ENCODE measurements at regions of chr1 and their contacts with region 1.

Region 1: DNA sequence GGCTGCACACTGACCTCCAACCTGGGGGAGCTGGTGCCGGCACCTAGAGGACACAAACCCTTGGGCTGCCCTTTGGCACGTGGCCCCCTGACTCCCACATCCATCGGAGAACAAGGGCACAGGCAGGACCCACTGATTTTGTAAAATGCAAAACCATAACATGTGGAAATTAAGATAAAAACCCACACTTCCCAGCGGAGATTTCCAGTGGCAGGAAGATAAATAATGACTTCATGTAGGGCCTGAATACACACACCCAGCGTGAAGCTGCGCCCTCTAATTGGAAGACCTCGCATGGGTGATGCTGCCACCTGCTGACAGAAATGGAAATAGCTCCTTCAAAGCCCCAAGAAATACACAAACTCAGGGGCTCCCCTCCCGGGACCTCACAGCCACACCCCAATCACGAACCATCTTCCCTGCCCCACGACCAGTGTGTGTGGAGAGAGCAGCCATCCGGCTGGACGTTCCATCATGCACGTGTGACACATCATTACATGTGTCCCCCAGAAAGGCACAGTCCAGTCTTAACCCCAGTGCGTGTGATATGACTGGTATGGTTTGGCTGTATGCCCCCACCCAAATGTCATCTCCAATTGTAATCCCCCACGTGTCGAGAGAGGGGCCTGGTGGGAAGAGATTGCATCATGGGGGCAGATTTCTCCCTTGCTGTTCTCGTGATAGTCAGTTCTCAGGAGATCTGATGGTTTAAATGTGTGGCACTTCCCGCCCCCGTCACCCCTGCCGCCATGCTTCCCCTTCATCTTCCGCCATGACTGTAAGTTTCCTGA is 5.7 kb upstream of the TPRG1L start:
- DNase-seq: peak; percentile 81
- H3K4me3 Mint-ChIP-seq: no peak overlapping the region
- H3K27ac Mint-ChIP-seq: no peak overlapping the region
- H3K4me1 Mint-ChIP-seq: peaks cover 20% of the 10 kb centered on the region
- H3K27me3 Mint-ChIP-seq: no peaks in the 10 kb centered on the region

Region 2: DNA sequence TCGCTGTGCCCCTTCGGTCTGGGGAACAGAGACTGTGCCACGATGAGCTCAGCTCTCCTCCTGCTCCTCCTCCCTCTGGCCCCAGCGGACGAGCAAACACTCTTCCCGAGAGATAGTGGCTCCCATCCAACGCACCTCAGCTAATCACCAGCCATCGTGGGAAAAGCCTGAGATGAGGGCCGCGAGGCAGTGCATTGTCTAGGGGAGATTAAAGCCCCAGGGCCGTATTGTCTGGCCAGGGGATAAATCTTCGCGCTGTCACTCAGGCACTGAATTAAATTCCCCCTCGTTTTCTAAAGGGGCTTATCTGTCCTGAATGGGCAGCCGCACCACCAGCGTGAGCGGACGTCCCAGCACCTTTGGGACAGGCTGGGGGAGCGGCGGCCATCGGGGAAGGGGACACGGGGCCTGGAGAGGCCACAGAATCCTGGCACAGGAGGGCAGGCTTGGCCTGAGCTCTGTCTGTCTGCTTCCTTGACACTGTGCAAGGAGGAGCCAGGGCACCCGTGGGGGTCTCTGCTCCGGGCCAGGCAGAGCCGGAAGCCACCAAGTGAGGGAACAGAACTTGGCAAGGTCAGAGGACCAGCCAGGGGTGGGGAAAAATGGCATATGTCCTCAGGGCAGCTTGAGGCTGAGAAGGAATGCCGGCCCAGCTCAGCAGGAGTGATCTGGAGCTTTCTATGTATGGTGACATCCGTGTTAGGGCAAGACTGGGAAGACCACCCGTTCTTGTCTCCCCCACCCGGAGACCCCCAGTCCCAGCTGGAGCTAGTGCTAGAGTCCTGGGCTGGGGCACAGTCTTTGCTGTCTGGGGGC is 517.7 kb before region 1 on chr1:
- CTCF ChIA-PET with region 1: no interaction called
- intact Hi-C with region 1: no loop called
- DNase-seq: no peak
- H3K4me3 Mint-ChIP-seq: no peak overlapping the region
- H3K27ac Mint-ChIP-seq: no peak overlapping the region
- H3K4me1 Mint-ChIP-seq: no peaks in the 10 kb centered on the region
- H3K27me3 Mint-ChIP-seq: peaks cover 3% of the 10 kb centered on the region

Region 3: DNA sequence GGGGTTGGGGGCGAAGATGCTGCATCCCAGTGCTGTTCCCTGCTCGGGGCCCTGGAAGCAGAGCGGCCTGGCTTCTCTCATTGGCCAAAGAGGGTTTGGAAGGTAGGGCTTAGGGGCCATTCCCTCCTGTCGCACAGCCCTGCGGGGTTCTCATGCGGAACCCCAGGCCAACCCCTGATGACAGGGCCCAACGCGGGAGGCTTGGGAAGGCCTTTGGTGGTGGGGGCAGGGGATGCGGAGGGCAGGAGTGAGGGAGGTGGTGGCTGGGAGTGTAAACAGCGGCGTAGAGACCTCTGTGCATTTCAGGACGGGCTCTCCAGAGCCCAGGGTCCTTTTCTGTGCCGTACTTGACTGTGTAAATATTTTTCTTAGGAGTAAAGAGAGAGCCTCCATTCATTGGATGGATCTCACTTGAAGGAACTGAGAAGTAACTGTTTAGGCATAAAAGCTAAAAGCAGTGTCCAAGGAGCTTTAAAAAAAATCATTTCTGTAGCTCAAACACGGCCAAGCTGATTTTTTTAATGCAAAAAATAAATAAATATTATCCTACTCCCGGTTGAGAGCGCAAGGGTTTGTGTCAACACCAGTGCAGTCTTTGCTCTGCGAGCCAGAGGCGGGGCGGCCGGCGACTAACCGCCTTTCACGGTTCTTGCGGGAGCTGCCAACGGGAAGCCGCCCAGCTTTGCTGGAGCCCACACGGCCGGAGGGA is 380.9 kb before region 1 on chr1:
- CTCF ChIA-PET with region 1: no interaction called
- intact Hi-C with region 1: no loop called
- DNase-seq: no peak
- H3K4me3 Mint-ChIP-seq: no peak overlapping the region
- H3K27ac Mint-ChIP-seq: no peak overlapping the region
- H3K4me1 Mint-ChIP-seq: no peaks in the 10 kb centered on the region
- H3K27me3 Mint-ChIP-seq: no peaks in the 10 kb centered on the region

Region 4: GRCh38 chr1:3453203-3453761 is 165.8 kb before region 1 on chr1:
- CTCF ChIA-PET with region 1: interaction called, 25 read pairs
- intact Hi-C with region 1: loop called (anchors 1 kb)
- DNase-seq: peak; percentile 84
- H3K4me3 Mint-ChIP-seq: peak overlapping the region; percentile 32
- H3K27ac Mint-ChIP-seq: no peak overlapping the region
- H3K4me1 Mint-ChIP-seq: peaks cover 2% of the 10 kb centered on the region
- H3K27me3 Mint-ChIP-seq: peaks cover 7% of the 10 kb centered on the region

Region 5: GRCh38 chr1:3491291-3492246 is 127.5 kb before region 1 on chr1:
- CTCF ChIA-PET with region 1: interaction called, 20 read pairs
- intact Hi-C with region 1: loop called (anchors 1 kb)
- DNase-seq: peak; percentile 92
- H3K4me3 Mint-ChIP-seq: no peak overlapping the region
- H3K27ac Mint-ChIP-seq: no peak overlapping the region
- H3K4me1 Mint-ChIP-seq: peaks cover 5% of the 10 kb centered on the region
- H3K27me3 Mint-ChIP-seq: no peaks in the 10 kb centered on the region

Region 6: GRCh38 chr1:3518256-3518655 is 100.8 kb before region 1 on chr1:
- CTCF ChIA-PET with region 1: interaction called, 15 read pairs
- intact Hi-C with region 1: no loop called
- DNase-seq: peak; percentile 24
- H3K4me3 Mint-ChIP-seq: no peak overlapping the region
- H3K27ac Mint-ChIP-seq: no peak overlapping the region
- H3K4me1 Mint-ChIP-seq: no peaks in the 10 kb centered on the region
- H3K27me3 Mint-ChIP-seq: no peaks in the 10 kb centered on the region

Region 7: GRCh38 chr1:3564921-3565827 is 53.9 kb before region 1 on chr1:
- CTCF ChIA-PET with region 1: interaction called, 20 read pairs
- intact Hi-C with region 1: loop called (anchors 1 kb)
- DNase-seq: peak; percentile 31
- H3K4me3 Mint-ChIP-seq: no peak overlapping the region
- H3K27ac Mint-ChIP-seq: no peak overlapping the region
- H3K4me1 Mint-ChIP-seq: no peaks in the 10 kb centered on the region
- H3K27me3 Mint-ChIP-seq: no peaks in the 10 kb centered on the region

Region 8: GRCh38 chr1:3727042-3727824 is 108.2 kb after region 1 on chr1:
- CTCF ChIA-PET with region 1: no interaction called
- intact Hi-C with region 1: loop called (anchors 2 kb)
- DNase-seq: peak; percentile 23
- H3K4me3 Mint-ChIP-seq: no peak overlapping the region
- H3K27ac Mint-ChIP-seq: no peak overlapping the region
- H3K4me1 Mint-ChIP-seq: no peaks in the 10 kb centered on the region
- H3K27me3 Mint-ChIP-seq: peaks cover 2% of the 10 kb centered on the region